ENCODE measurements at regions of chr12 and their contacts with region 1.

Region 1: GRCh38 chr12:12704593-12705230 is 8.7 kb upstream of the GPR19 start:
- DNase-seq: peak; percentile 95
- ATAC-seq: peak; percentile 100
- H3K4me3 ChIP-seq: no peak overlapping the region
- H3K27ac ChIP-seq: no peak overlapping the region
- H3K4me1 ChIP-seq: no peaks in the 10 kb centered on the region
- H3K27me3 ChIP-seq: no peaks in the 10 kb centered on the region
- CTCF ChIP-seq: peak; percentile 100; the same call in 1 of the 2 replicates
- POLR2A ChIP-seq: peak; percentile 68; the same call in 1 of the 2 replicates
- RAD21 ChIP-seq: peak; percentile 100

Region 2: GRCh38 chr12:11553871-11554533 is 1150.7 kb before region 1 on chr12:
- CTCF ChIA-PET with region 1: no interaction called
- POLR2A ChIA-PET with region 1: no interaction called
- dilution Hi-C with region 1: no loop called
- in situ Hi-C with region 1: no loop called
- intact Hi-C with region 1: loop called (anchors 10 kb)
- DNase-seq: peak; percentile 59
- ATAC-seq: peak; percentile 91
- H3K4me3 ChIP-seq: no peak overlapping the region
- H3K27ac ChIP-seq: no peak overlapping the region
- H3K4me1 ChIP-seq: peaks cover 3% of the 10 kb centered on the region; the same call in 1 of the 2 replicates
- H3K27me3 ChIP-seq: peaks cover 34% of the 10 kb centered on the region
- CTCF ChIP-seq: peak; percentile 61
- POLR2A ChIP-seq: no peak
- RAD21 ChIP-seq: peak; percentile 58

Region 3: GRCh38 chr12:11581179-11581755 is 1123.4 kb before region 1 on chr12:
- CTCF ChIA-PET with region 1: no interaction called
- POLR2A ChIA-PET with region 1: no interaction called
- dilution Hi-C with region 1: no loop called
- in situ Hi-C with region 1: loop called (anchors 10 kb)
- intact Hi-C with region 1: loop called (anchors 1 kb)
- DNase-seq: peak; percentile 78
- ATAC-seq: 0 out of 2 replicates have a peak, but pooled peaks have one; percentile 19
- H3K4me3 ChIP-seq: no peak overlapping the region
- H3K27ac ChIP-seq: no peak overlapping the region
- H3K4me1 ChIP-seq: peaks cover 7% of the 10 kb centered on the region
- H3K27me3 ChIP-seq: peaks cover 5% of the 10 kb centered on the region
- CTCF ChIP-seq: peak; percentile 63
- POLR2A ChIP-seq: no peak
- RAD21 ChIP-seq: peak; percentile 87

Region 4: GRCh38 chr12:12081836-12082497 is 622.7 kb before region 1 on chr12:
- CTCF ChIA-PET with region 1: no interaction called
- POLR2A ChIA-PET with region 1: no interaction called
- dilution Hi-C with region 1: no loop called
- in situ Hi-C with region 1: no loop called
- intact Hi-C with region 1: loop called (anchors 1 kb)
- DNase-seq: peak; percentile 55
- ATAC-seq: peak; percentile 75
- H3K4me3 ChIP-seq: no peak overlapping the region
- H3K27ac ChIP-seq: no peak overlapping the region
- H3K4me1 ChIP-seq: peaks cover 3% of the 10 kb centered on the region
- H3K27me3 ChIP-seq: no peaks in the 10 kb centered on the region
- CTCF ChIP-seq: peak; percentile 46
- POLR2A ChIP-seq: no peak
- RAD21 ChIP-seq: peak; percentile 56

Region 5: DNA sequence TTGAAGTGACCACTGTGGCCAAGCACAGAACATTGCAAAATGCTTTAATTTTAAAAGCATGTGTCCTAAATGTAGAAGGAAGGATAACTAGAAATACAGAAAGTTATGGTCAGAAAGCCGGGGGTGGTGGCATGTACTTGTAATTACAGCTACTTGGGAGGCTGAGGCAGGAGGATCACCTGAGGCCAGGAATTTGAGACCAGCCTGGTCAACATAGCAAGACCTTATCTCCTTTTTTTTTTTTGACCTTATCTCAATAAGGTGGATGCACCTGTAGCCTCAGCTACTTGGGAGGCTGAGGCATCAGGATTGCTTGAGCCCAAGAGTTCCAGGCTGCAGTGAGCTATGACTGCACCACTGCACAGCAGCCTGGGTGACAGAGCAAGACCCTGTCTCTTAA is 314.3 kb before region 1 on chr12:
- CTCF ChIA-PET with region 1: no interaction called
- POLR2A ChIA-PET with region 1: no interaction called
- dilution Hi-C with region 1: no loop called
- in situ Hi-C with region 1: no loop called
- intact Hi-C with region 1: loop called (anchors 1 kb)
- DNase-seq: no peak
- ATAC-seq: no peak
- H3K4me3 ChIP-seq: no peak overlapping the region
- H3K27ac ChIP-seq: no peak overlapping the region
- H3K4me1 ChIP-seq: peaks cover 2% of the 10 kb centered on the region; the same call in 1 of the 2 replicates
- H3K27me3 ChIP-seq: no peaks in the 10 kb centered on the region
- CTCF ChIP-seq: no peak
- POLR2A ChIP-seq: no peak
- RAD21 ChIP-seq: no peak

Region 6: DNA sequence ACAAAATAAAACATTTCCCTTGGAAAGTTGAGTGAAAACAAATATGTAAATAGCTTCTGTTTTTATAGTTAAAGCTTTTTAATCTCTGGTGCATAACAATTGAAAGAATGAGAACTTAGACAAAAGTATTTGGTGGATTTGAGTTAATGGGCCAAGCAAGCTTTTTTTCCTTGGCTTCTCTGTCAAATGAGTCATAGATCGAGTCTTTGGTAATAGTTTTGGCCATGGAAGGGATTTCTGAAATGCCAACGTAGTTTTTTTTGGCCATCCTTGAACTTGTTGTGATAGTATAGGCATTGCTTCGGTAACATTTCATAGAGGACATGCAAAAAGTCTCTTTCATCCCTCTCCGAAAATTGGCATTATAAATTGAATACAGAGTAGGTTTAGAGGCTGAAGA is 43.6 kb before region 1 on chr12:
- CTCF ChIA-PET with region 1: no interaction called
- POLR2A ChIA-PET with region 1: no interaction called
- dilution Hi-C with region 1: no loop called
- in situ Hi-C with region 1: no loop called
- intact Hi-C with region 1: loop called (anchors 2 kb)
- DNase-seq: peak; percentile 76
- ATAC-seq: peak; percentile 35
- H3K4me3 ChIP-seq: no peak overlapping the region
- H3K27ac ChIP-seq: no peak overlapping the region
- H3K4me1 ChIP-seq: no peaks in the 10 kb centered on the region
- H3K27me3 ChIP-seq: no peaks in the 10 kb centered on the region
- CTCF ChIP-seq: no peak
- POLR2A ChIP-seq: no peak
- RAD21 ChIP-seq: no peak